Calu3 (cell line): ENCODE measurements at regions of chr3 and their contacts with region 1.

Region 1: GRCh38 chr3:141738022-141738890 is at the start of gene RNF7:
- DNase-seq: peak; percentile 99
- H3K4me3 Mint-ChIP-seq: peak within 1 kb of the TSS; percentile 95
- H3K27ac Mint-ChIP-seq: peak within 1 kb of the TSS; percentile 93
- H3K4me1 Mint-ChIP-seq: peaks cover 29% of the 10 kb centered on the region
- H3K27me3 Mint-ChIP-seq: no peaks in the 10 kb centered on the region
- CTCF ChIP-seq: peak; percentile 94
- total RNA-seq, gene RNF7: 108 and 113 TPM in 2 replicates

Region 2: DNA sequence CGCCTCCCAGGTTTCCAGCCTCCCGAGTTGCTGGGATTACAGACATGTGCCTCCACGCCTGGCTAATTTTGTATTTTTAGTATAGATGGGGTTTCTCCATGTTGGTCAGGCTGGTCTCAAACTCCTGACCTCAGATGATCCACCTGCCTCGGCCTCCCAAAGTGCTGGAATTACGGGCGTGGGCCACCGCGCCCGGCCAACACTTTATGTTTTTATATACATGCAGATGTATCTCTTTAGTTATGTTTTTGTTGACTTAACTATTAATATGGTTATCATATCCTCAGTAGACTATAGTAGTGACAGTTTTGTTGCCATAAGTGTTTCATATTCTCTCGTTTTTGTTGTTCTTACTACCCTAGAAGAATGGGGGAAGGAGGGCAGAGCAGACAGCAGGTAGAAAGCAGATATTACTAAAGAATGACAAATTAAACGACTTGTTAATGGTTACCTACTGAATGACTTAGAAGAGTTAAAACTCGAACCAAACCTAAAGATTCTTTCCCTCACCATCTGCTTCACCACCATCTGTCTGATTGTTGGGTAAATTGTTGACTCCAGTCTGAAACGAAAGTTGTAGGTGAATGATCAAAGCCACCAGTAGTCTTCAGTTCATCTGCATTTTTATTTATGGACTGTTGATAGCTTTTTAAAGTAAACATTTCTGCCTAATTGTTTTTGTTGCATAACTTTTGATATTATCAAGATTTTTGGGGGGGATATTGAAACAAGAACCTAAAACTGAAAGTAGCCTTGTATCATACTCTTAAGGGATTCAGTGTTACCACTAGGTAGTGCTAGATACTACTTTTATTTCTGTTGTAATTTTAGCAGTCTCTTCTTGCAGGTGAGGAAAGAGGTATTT is 162.1 kb before region 1 on chr3:
- CTCF ChIA-PET with region 1: no interaction called
- intact Hi-C with region 1: loop called (anchors 1 kb)
- DNase-seq: no peak
- H3K4me3 Mint-ChIP-seq: no peak overlapping the region
- H3K27ac Mint-ChIP-seq: no peak overlapping the region
- H3K4me1 Mint-ChIP-seq: no peaks in the 10 kb centered on the region
- H3K27me3 Mint-ChIP-seq: no peaks in the 10 kb centered on the region
- CTCF ChIP-seq: peak; percentile 39

Region 3: DNA sequence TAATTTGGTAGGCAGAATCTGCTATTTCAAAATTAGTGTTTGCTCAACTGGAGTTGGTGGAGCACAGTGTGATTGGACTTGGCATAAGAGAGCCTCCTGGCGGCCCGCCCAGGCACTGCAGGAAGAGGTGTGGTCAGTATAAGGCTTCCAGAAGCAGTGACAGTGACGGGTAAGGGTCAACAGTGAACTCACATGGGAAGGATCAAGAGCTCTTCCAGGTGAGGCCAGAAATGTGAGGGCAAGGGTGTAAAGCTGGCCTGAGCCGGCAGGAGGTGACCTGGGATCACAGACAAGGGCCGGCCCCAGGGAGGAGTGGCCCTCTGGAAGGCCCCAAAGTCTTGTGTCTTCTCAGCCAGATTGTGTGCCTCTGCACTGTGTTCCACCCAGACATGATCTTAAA is 93.3 kb before region 1 on chr3:
- CTCF ChIA-PET with region 1: interaction called, 3 read pairs
- intact Hi-C with region 1: loop called (anchors 5 kb)
- DNase-seq: peak; percentile 87
- H3K4me3 Mint-ChIP-seq: no peak overlapping the region
- H3K27ac Mint-ChIP-seq: no peak overlapping the region
- H3K4me1 Mint-ChIP-seq: no peaks in the 10 kb centered on the region
- H3K27me3 Mint-ChIP-seq: no peaks in the 10 kb centered on the region
- CTCF ChIP-seq: peak; percentile 88

Region 4: GRCh38 chr3:141913150-141913811 is 175.0 kb after region 1 on chr3:
- CTCF ChIA-PET with region 1: interaction called, 8 read pairs
- intact Hi-C with region 1: loop called (anchors 1 kb)
- DNase-seq: peak; percentile 68
- H3K4me3 Mint-ChIP-seq: no peak overlapping the region
- H3K27ac Mint-ChIP-seq: no peak overlapping the region
- H3K4me1 Mint-ChIP-seq: no peaks in the 10 kb centered on the region
- H3K27me3 Mint-ChIP-seq: no peaks in the 10 kb centered on the region
- CTCF ChIP-seq: peak; percentile 47